Heart left ventricle (tissue), 16 donors: ENCODE measurements at regions of chr4 and their contacts with region 1.

Region 1: DNA sequence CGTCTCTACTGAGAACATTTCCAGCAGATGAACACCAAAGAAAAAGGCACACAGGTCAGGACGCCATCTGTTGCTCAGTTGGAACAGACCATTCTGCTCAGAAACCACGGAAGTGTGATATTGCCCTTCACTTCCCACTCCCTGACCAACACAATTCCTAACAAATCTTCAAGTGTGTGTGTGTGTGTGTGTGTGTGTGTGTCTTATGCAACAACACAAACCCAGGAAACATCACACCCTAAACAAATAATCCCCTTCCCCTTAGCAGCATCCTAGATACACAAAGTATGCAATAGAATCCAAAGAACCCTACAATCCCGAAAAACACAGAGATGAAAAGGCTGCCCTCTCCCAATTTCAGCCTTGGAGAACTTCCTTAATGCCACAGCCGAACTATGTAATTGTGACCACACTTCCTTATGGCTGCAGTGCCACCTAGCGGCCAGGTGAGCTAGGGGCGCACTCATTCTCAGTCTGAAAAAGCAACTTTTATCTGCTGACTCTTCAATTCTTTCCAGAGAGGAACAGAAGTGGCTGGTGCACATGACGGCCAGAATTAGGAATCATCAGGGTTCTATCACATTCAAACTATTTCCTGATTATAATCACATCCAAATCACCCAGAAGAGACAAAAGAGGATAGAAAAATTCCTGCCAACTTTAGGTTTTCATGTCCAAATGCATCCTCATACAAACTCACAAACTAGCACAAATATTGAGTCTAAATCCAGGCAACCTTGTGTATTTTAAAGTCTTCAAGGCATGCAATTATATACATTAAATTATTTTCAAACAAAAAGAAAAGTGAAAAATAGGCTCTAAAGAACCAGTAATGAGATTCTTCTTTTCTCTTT is 164.9 kb downstream of the DHX15 start:
- DNase-seq: peak; percentile 62 to 80 (median 69)
- ATAC-seq: peak; percentile 70 to 87 (median 86)
- H3K4me3 ChIP-seq: no peak overlapping the region
- H3K27ac ChIP-seq: no peak overlapping the region
- H3K4me1 ChIP-seq: peaks cover 0 to 7% (median 0%) of the 10 kb centered on the region in 12 donors
- H3K27me3 ChIP-seq: no peaks in the 10 kb centered on the region
- CTCF ChIP-seq: peak; percentile 81 to 95 (median 90)
- POLR2A ChIP-seq: no peak

Region 2: GRCh38 chr4:23135792-23136645 is 1283.4 kb before region 1 on chr4:
- intact Hi-C with region 1: loop called in 2 of 10 experiments (anchors 5 to 10 kb)
- DNase-seq: no peak
- ATAC-seq: no peak
- H3K4me3 ChIP-seq: no peak overlapping the region
- H3K27ac ChIP-seq: no peak overlapping the region
- H3K4me1 ChIP-seq: no peaks in the 10 kb centered on the region
- H3K27me3 ChIP-seq: no peaks in the 10 kb centered on the region
- CTCF ChIP-seq: peak; percentile 62 to 81 (median 74)
- POLR2A ChIP-seq: no peak

Region 3: DNA sequence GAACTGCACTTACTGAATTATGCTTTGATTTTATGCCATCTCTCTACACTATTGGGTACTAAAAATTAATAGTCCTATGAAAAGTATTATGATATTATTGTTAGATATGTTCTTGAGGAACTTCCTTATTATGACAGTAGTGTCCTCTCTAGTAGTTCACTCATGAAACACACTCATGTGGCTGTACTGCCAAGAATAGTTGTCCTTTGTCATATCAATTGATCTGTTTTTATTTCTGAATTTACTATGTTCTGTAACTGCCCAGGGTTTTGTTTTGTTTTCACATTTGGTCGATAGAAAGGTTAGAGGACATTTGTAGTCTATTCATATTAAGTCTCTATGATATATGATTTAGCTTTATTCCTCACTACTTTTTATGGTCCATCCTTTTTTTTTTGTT is 744.7 kb before region 1 on chr4:
- intact Hi-C with region 1: loop called in 1 of 10 experiments (anchors 10 kb)
- DNase-seq: no peak
- ATAC-seq: no peak
- H3K4me3 ChIP-seq: no peak overlapping the region
- H3K27ac ChIP-seq: no peak overlapping the region
- H3K4me1 ChIP-seq: no peaks in the 10 kb centered on the region
- H3K27me3 ChIP-seq: no peaks in the 10 kb centered on the region
- CTCF ChIP-seq: no peak
- POLR2A ChIP-seq: no peak

Region 4: GRCh38 chr4:23877758-23878229 is 541.6 kb before region 1 on chr4:
- intact Hi-C with region 1: loop called in 1 of 10 experiments (anchors 10 kb)
- DNase-seq: peak in 1 of 5 donors; percentile 41
- ATAC-seq: peak; percentile 68 to 84 (median 77)
- H3K4me3 ChIP-seq: peak overlapping the region in 1 of 12 donors; percentile 9
- H3K27ac ChIP-seq: peak overlapping the region; percentile 44 to 94 (median 76)
- H3K4me1 ChIP-seq: peaks cover 0 to 86% (median 13%) of the 10 kb centered on the region in 12 donors
- H3K27me3 ChIP-seq: no peaks in the 10 kb centered on the region
- CTCF ChIP-seq: no peak
- POLR2A ChIP-seq: no peak

Region 5: DNA sequence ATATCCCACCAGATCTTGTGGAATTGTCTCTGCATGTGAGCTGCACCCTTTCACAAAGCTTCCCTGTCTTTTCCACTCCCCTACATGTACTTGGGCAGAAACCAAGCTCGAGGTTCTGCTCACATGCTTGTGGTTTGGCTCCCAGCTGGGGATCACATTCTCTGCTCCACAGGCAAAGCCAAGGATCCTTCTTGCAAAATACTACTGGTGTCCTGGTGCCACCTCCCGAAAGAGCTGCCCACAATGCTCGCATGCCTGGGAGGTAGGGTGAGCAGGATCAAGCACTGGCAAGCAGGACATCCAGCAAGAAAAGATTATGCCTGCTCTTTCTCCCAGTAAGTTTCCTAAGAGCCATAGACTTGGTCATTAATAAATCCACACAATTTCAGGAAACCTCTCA is 484.5 kb before region 1 on chr4:
- intact Hi-C with region 1: loop called in 1 of 10 experiments (anchors 5 kb)
- DNase-seq: peak; percentile 64 to 86 (median 76)
- ATAC-seq: peak; percentile 47 to 80 (median 70)
- H3K4me3 ChIP-seq: no peak overlapping the region
- H3K27ac ChIP-seq: peak overlapping the region; percentile 23 to 95 (median 80)
- H3K4me1 ChIP-seq: peaks cover 0 to 44% (median 9%) of the 10 kb centered on the region in 12 donors
- H3K27me3 ChIP-seq: no peaks in the 10 kb centered on the region
- CTCF ChIP-seq: peak in 2 of 12 donors; percentile 11 to 30
- POLR2A ChIP-seq: no peak

Region 6: GRCh38 chr4:24229976-24230375 is 189.4 kb before region 1 on chr4:
- intact Hi-C with region 1: loop called in 1 of 10 experiments (anchors 10 kb)
- DNase-seq: no peak
- ATAC-seq: no peak
- H3K4me3 ChIP-seq: no peak overlapping the region
- H3K27ac ChIP-seq: no peak overlapping the region
- H3K4me1 ChIP-seq: peaks cover 0 to 12% (median 1%) of the 10 kb centered on the region in 12 donors
- H3K27me3 ChIP-seq: no peaks in the 10 kb centered on the region
- CTCF ChIP-seq: no peak
- POLR2A ChIP-seq: no peak

Region 7: DNA sequence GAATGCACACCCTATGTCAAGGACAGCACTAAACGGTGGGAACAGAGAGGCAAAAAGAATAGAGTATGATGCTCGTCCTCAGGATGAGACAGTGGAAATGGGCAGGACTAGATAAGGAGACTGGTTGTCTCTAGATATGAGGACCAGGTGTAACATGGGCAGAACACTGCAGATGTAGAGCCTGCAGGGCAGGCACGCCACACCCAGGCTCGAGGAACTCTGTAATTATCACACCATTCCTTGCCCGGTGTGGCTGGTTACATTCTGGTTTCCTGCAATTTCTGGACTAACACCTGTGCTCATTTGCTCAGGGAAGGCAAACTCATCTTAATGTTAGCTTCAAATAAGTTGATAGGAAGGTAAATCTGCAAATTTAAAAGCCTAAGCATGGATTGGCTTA is 169.4 kb before region 1 on chr4:
- intact Hi-C with region 1: loop called in 4 of 10 experiments (anchors 5 to 10 kb)
- DNase-seq: no peak
- ATAC-seq: no peak
- H3K4me3 ChIP-seq: no peak overlapping the region
- H3K27ac ChIP-seq: peak overlapping the region in 7 of 12 donors; percentile 73 to 88 (median 81)
- H3K4me1 ChIP-seq: peaks cover 5 to 52% (median 17%) of the 10 kb centered on the region in 12 donors
- H3K27me3 ChIP-seq: no peaks in the 10 kb centered on the region
- CTCF ChIP-seq: no peak
- POLR2A ChIP-seq: no peak